SK-N-SH (cell line): ENCODE measurements at regions of chr7 and their contacts with region 1.

Region 1: GRCh38 chr7:116588641-116589594 is 64.1 kb downstream of the CAV1 start:
- DNase-seq: peak; percentile 21
- H3K4me3 ChIP-seq: no peak overlapping the region; a peak in 1 of 4 replicates
- H3K27ac ChIP-seq: peak overlapping the region; percentile 7 to 76; a peak in 3 of 4 replicates
- H3K4me1 ChIP-seq: peaks cover 5 to 19% of the 10 kb centered on the region in 2 experiments; a peak in 3 of 4 replicates
- H3K27me3 ChIP-seq: no peaks in the 10 kb centered on the region; the same call in 1 of the 2 replicates
- CTCF ChIP-seq: peak; percentile 93
- EP300 ChIP-seq: 0 out of 4 replicates have a peak, but pooled peaks of 1 of the 2 experiments have one; percentile 1
- RAD21 ChIP-seq: peak; percentile 88

Region 2: GRCh38 chr7:116138202-116138801 is 450.6 kb before region 1 on chr7:
- CTCF ChIA-PET with region 1: interaction called, 21 read pairs
- POLR2A ChIA-PET with region 1: no interaction called
- DNase-seq: peak; percentile 44
- H3K4me3 ChIP-seq: no peak overlapping the region
- H3K27ac ChIP-seq: no peak overlapping the region
- H3K4me1 ChIP-seq: no peaks in the 10 kb centered on the region
- H3K27me3 ChIP-seq: peaks cover 46% of the 10 kb centered on the region
- CTCF ChIP-seq: peak; percentile 98
- EP300 ChIP-seq: no peak
- RAD21 ChIP-seq: peak; percentile 79

Region 3: DNA sequence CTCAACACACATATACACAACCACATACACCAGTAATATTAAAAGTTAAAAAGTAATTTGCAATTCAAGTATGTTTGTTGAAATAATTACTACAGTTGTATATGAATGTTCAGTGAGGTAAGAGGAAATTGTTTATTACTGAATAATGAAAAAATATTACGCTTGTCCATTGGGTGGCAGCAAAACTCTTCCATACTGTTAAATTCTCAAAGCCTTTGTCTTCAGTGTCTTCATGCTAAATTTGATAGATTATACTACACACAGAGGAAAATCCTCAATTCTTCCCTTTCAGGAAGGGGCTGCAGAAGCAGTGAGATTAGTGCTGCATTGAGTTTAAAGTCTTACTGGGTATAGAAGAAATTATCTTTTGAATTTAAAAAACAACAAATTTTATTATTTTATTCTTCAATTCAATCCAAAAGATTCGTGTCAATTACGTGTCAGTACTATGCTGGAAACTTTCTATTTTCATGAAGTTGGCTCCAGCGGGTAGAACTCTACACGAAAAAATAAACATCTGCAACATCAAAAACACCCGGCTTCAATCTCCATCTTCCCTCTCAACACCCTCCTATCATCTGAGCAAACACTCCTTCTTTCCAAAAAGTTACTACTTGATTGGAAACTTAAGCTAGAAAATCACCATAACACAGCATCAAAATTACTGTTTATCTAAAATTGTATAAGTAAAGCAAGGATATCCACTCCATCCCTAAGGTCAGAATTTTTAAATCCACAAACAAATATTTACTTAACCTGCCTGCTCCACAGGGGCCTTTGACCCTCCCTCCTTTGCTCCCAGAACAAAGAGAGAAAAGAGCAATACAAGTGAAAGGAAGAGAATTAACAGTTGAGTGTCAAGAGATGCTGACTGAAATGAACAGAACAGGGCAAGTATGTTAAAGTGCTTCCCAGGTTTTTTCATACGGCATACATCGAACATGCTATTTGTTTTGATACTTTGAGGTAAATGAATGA is 415.6 kb before region 1 on chr7:
- CTCF ChIA-PET with region 1: interaction called, 78 read pairs
- POLR2A ChIA-PET with region 1: no interaction called
- DNase-seq: peak; percentile 38
- H3K4me3 ChIP-seq: no peak overlapping the region
- H3K27ac ChIP-seq: no peak overlapping the region
- H3K4me1 ChIP-seq: peaks cover 0 to 6% of the 10 kb centered on the region in 2 experiments; a peak in 1 of 4 replicates
- H3K27me3 ChIP-seq: peaks cover 19% of the 10 kb centered on the region
- CTCF ChIP-seq: peak; percentile 86
- EP300 ChIP-seq: no peak
- RAD21 ChIP-seq: peak; percentile 97

Region 4: GRCh38 chr7:116242178-116242577 is 346.7 kb before region 1 on chr7:
- CTCF ChIA-PET with region 1: interaction called, 28 read pairs
- POLR2A ChIA-PET with region 1: no interaction called
- DNase-seq: no peak
- H3K4me3 ChIP-seq: no peak overlapping the region
- H3K27ac ChIP-seq: no peak overlapping the region
- H3K4me1 ChIP-seq: peaks cover 7 to 9% of the 10 kb centered on the region in 2 experiments; a peak in 3 of 4 replicates
- H3K27me3 ChIP-seq: no peaks in the 10 kb centered on the region
- CTCF ChIP-seq: peak; percentile 60
- EP300 ChIP-seq: no peak
- RAD21 ChIP-seq: peak; percentile 32

Region 5: DNA sequence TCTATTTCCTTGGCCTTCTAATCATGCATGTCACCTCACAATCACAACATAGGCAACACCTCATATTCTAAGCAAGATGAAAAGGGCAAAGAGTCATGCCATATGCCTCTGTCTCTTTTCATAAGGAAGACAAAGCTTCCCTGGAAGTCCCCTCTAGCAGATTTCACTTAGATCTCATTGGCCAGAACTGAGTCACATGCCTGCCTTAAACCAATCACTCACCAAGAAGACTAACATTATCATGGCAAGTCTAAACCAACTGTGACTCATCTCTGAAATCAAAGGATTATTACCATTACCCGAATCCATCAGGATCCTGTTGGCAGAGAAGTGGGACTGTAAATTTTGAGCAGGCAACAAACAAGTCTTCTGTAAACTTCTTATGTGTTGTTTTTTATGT is 36.3 kb before region 1 on chr7:
- CTCF ChIA-PET with region 1: interaction called, 10 read pairs
- POLR2A ChIA-PET with region 1: no interaction called
- DNase-seq: no peak
- H3K4me3 ChIP-seq: no peak overlapping the region
- H3K27ac ChIP-seq: peak overlapping the region in 1 of 2 experiments; percentile 69; a peak in 1 of 4 replicates
- H3K4me1 ChIP-seq: peaks cover 0 to 77% of the 10 kb centered on the region in 2 experiments
- H3K27me3 ChIP-seq: no peaks in the 10 kb centered on the region
- CTCF ChIP-seq: no peak
- EP300 ChIP-seq: no peak
- RAD21 ChIP-seq: no peak

Region 6: GRCh38 chr7:116610210-116610609 is 21.3 kb after region 1 on chr7:
- CTCF ChIA-PET with region 1: interaction called, 59 read pairs
- POLR2A ChIA-PET with region 1: no interaction called
- DNase-seq: no peak
- H3K4me3 ChIP-seq: no peak overlapping the region
- H3K27ac ChIP-seq: no peak overlapping the region
- H3K4me1 ChIP-seq: no peaks in the 10 kb centered on the region
- H3K27me3 ChIP-seq: peaks cover 22% of the 10 kb centered on the region; the same call in 1 of the 2 replicates
- CTCF ChIP-seq: no peak
- EP300 ChIP-seq: 0 out of 4 replicates have a peak, but pooled peaks of 1 of the 2 experiments have one; percentile 14
- RAD21 ChIP-seq: no peak